PC-3 (cell line): ENCODE measurements at regions of chr10 and their contacts with region 1.

Region 1: GRCh38 chr10:74875952-74876351 is 49.6 kb downstream of the KAT6B start:
- DNase-seq: peak; percentile 99
- ATAC-seq: peak; percentile 92
- H3K4me3 ChIP-seq: peak overlapping the region; percentile 1; the same call in 1 of the 2 replicates
- H3K27ac ChIP-seq: peak overlapping the region; percentile 67
- H3K4me1 ChIP-seq: peaks cover 56% of the 10 kb centered on the region
- H3K27me3 ChIP-seq: no peaks in the 10 kb centered on the region
- CTCF ChIP-seq: no peak

Region 2: DNA sequence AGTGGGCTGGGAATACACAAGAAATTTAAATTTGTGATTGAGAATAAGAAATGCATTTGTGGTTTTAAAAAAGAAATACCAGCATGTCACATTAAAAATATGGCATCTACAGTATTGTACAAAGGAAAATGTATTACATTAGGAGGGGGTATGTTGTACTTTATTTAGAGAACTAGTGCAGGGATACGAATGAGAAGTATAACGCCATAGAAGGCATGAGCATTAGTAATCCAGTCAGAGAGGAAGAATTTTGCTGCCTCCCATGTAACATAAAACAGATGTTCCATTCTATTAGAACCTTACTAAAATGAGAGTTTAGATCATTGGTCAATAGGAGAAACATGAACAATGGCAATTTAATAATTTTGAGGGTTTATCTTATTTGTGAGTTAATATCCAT is 542.8 kb before region 1 on chr10:
- CTCF ChIA-PET with region 1: no interaction called
- POLR2A ChIA-PET with region 1: no interaction called
- intact Hi-C with region 1: no loop called
- DNase-seq: no peak
- ATAC-seq: no peak
- H3K4me3 ChIP-seq: no peak overlapping the region
- H3K27ac ChIP-seq: no peak overlapping the region
- H3K4me1 ChIP-seq: peaks cover 8% of the 10 kb centered on the region; the same call in 1 of the 2 replicates
- H3K27me3 ChIP-seq: no peaks in the 10 kb centered on the region
- CTCF ChIP-seq: no peak

Region 3: DNA sequence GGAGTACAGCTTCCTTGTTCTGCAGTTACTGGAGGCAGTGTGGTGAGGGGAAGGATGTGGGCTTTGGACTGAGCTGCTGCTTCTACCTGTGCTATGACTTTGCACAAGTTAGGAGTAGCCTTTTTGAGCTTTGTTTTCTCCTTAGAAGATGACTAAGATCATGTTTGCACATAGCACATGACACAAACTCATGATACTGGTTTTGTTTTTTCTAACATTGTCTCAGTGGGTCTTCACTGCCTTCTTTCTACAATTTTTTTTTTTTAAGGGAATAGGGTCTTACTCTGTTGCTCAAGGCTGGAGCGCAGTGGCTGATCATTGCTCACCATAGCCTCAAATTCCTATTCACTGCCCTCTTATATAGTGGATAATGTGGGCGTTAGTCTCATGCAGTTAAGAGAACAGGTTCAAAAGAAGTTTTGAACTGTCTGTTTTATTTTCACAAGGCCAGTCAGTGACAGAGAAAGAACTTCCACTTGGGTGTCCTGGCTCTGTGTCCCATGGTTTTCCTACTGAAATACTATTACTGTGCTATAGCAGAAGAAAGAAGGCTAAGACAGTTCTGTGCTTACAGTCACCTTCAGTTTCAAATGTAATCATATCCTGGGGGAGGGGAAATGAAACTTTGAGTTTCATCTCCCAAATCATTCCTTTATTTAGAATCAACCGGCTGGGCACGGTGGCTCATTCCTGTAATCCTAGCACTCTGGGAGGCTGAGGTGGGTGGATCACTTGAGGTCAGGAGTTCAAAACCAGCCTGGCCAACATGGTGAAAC is 22.4 kb after region 1 on chr10:
- CTCF ChIA-PET with region 1: no interaction called
- POLR2A ChIA-PET with region 1: interaction called, 4 read pairs
- intact Hi-C with region 1: loop called (anchors 1 kb)
- DNase-seq: peak; percentile 96
- ATAC-seq: peak; percentile 89
- H3K4me3 ChIP-seq: no peak overlapping the region
- H3K27ac ChIP-seq: peak overlapping the region; percentile 51
- H3K4me1 ChIP-seq: peaks cover 24% of the 10 kb centered on the region
- H3K27me3 ChIP-seq: no peaks in the 10 kb centered on the region
- CTCF ChIP-seq: no peak

Region 4: DNA sequence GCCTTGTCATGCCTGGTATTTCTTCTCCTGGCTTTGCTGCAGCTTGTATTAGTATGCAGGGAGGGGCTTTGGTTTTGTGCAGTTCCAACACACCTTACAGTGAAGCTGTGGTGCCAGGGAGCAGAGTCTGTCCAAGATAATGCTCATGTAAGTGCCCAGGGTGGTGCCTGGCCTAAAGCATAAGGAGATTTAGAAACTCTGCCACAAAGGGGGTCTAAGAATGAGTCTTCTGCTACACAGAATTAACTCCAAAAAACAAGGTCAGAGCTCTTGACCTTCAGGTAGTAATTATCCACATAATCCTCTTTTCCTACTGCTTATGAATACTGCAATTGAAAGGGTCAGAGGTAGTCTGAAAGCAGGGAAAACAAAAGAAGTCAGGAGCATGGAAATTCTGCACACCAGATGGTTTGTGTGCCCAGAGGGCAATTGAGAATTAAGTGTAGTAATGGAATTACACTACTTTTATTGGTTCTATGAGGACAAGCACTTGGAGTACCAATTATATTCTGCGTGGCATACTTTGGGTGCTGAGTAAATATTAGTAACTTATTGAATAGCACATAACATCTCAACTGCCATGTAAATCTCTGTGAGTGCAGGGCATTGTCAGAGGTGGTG is 71.9 kb after region 1 on chr10:
- CTCF ChIA-PET with region 1: interaction called, 3 read pairs
- POLR2A ChIA-PET with region 1: no interaction called
- intact Hi-C with region 1: loop called (anchors 1 kb)
- DNase-seq: peak; percentile 99
- ATAC-seq: peak; percentile 87
- H3K4me3 ChIP-seq: no peak overlapping the region; the same call in 1 of the 2 replicates
- H3K27ac ChIP-seq: peak overlapping the region; percentile 54
- H3K4me1 ChIP-seq: peaks cover 43% of the 10 kb centered on the region
- H3K27me3 ChIP-seq: no peaks in the 10 kb centered on the region
- CTCF ChIP-seq: no peak

Region 5: DNA sequence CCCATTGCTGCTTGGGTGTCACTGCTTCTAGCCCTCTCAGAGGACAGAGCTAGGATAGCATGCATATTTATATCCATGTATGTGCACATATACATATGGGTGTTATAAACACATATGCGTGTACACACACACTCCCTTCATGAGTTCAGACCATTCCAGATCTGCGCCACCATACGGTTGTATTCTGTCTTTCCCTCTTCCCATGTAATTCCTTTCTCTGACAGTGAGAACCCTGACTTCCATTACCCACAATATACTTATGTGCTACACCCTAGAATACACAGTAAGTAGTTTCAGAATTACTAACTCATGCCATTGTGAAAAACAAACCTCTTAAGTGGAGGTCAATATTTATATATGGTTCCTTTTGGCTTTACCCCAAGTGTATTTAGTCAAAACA is 118.9 kb after region 1 on chr10:
- CTCF ChIA-PET with region 1: no interaction called
- POLR2A ChIA-PET with region 1: no interaction called
- intact Hi-C with region 1: loop called (anchors 1 kb)
- DNase-seq: peak; percentile 78
- ATAC-seq: peak; percentile 83
- H3K4me3 ChIP-seq: no peak overlapping the region
- H3K27ac ChIP-seq: 0 out of 2 replicates have a peak overlapping the region, but pooled peaks have one; percentile 0
- H3K4me1 ChIP-seq: peaks cover 14% of the 10 kb centered on the region
- H3K27me3 ChIP-seq: no peaks in the 10 kb centered on the region
- CTCF ChIP-seq: no peak